ENCODE measurements at regions of chrX and their contacts with region 1.

Region 1: GRCh38 chrX:51144852-51145442 is 187.7 kb upstream of the NUDT10 start:
- DNase-seq: peak; percentile 32 to 48 (median 41)
- ATAC-seq: peak; percentile 90
- H3K4me3 ChIP-seq: no peak overlapping the region
- H3K27ac ChIP-seq: no peak overlapping the region
- H3K4me1 ChIP-seq: no peaks in the 10 kb centered on the region
- H3K27me3 ChIP-seq: no peaks in the 10 kb centered on the region
- CTCF ChIP-seq: peak; percentile 64 to 76 (median 67)
- EP300 ChIP-seq: no peak
- POLR2A ChIP-seq: no peak
- RAD21 ChIP-seq: peak in 1 of 2 experiments; percentile 43; a peak in 2 of 4 replicates

Region 2: GRCh38 chrX:51158231-51158787 is 13.4 kb after region 1 on chrX:
- CTCF ChIA-PET with region 1: no interaction called
- POLR2A ChIA-PET with region 1: no interaction called
- in situ Hi-C with region 1: no loop called
- intact Hi-C with region 1: no loop called
- DNase-seq: no peak
- ATAC-seq: no peak
- H3K4me3 ChIP-seq: no peak overlapping the region
- H3K27ac ChIP-seq: no peak overlapping the region
- H3K4me1 ChIP-seq: no peaks in the 10 kb centered on the region
- H3K27me3 ChIP-seq: no peaks in the 10 kb centered on the region
- CTCF ChIP-seq: no peak
- EP300 ChIP-seq: no peak
- POLR2A ChIP-seq: no peak
- RAD21 ChIP-seq: no peak

Region 3: GRCh38 chrX:51420610-51421009 is 275.7 kb after region 1 on chrX:
- CTCF ChIA-PET with region 1: no interaction called
- POLR2A ChIA-PET with region 1: no interaction called
- in situ Hi-C with region 1: no loop called
- intact Hi-C with region 1: loop called (anchors 10 kb)
- DNase-seq: peak; percentile 12 to 39 (median 15)
- ATAC-seq: no peak
- H3K4me3 ChIP-seq: no peak overlapping the region
- H3K27ac ChIP-seq: no peak overlapping the region
- H3K4me1 ChIP-seq: no peaks in the 10 kb centered on the region
- H3K27me3 ChIP-seq: no peaks in the 10 kb centered on the region
- CTCF ChIP-seq: peak; percentile 39 to 59 (median 54); a peak in 5 of 6 replicates
- EP300 ChIP-seq: no peak
- POLR2A ChIP-seq: no peak
- RAD21 ChIP-seq: peak in 1 of 2 experiments; percentile 45; a peak in 2 of 4 replicates

Region 4: DNA sequence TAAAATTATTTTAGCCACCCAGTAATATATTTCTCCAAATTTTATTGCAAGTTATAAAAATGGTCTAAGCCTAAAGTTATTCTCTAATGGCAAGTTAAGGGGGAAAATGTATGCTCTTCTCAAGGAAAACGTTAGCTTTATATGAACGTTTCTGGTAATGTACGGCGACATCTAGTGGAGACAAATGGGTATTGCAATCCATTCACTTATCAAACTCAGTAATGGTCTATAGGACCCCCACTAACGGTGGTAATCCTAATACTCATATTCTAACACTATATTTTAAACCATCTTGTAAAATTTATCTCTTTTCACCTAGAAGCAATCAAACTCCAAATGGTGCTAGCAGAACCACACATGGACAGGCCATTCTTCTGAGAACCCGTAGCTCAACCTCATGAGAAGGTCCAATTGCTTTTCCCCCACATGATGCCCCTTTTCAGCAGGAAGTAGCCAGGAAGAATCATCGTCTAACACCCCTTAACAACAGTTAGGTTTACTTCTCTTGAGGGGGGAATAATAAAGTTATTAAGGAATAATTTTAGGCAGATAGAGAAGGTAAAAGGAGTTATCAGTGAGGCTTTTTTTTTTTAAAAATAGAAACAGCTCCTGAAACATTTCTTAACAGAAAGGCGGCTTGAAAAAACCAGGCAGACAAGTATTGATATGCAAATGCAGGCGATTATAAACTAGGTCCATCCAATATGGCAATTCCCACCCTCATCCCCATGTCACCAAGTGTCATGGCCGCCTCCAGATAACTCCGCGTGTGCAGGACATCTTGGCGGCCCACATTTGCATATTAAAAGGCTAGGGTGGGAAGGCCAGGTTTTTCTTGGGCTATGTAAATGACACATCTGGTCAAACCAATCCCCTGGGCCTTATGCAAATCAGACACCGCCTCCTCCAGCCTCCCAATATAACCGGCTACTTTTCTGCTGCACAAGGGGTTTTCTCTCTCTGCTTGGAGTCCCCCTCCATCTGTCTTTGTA is 316.4 kb after region 1 on chrX:
- CTCF ChIA-PET with region 1: interaction called, 3 read pairs
- POLR2A ChIA-PET with region 1: no interaction called
- in situ Hi-C with region 1: no loop called
- intact Hi-C with region 1: loop called (anchors 5 kb)
- DNase-seq: peak; percentile 17 to 41 (median 32)
- ATAC-seq: peak; percentile 56
- H3K4me3 ChIP-seq: no peak overlapping the region
- H3K27ac ChIP-seq: no peak overlapping the region
- H3K4me1 ChIP-seq: no peaks in the 10 kb centered on the region
- H3K27me3 ChIP-seq: no peaks in the 10 kb centered on the region
- CTCF ChIP-seq: peak; percentile 46 to 54 (median 50); a peak in 5 of 6 replicates
- EP300 ChIP-seq: no peak
- POLR2A ChIP-seq: no peak
- RAD21 ChIP-seq: peak in 1 of 2 experiments; percentile 50; a peak in 2 of 4 replicates

Measured in K562 (cell line).